ENCODE measurements at regions of chr10 and their contacts with region 1.

Region 1: GRCh38 chr10:132506711-132507408 is 30.7 kb upstream of the INPP5A start:
- DNase-seq: peak in 1 of 2 donors; percentile 77
- ATAC-seq: peak; percentile 28 to 79 (median 63)
- H3K4me3 ChIP-seq: no peak overlapping the region
- H3K27ac ChIP-seq: peak overlapping the region; percentile 23
- H3K4me1 ChIP-seq: peaks cover 18% of the 10 kb centered on the region
- H3K27me3 ChIP-seq: no peaks in the 10 kb centered on the region
- CTCF ChIP-seq: no peak

Region 2: DNA sequence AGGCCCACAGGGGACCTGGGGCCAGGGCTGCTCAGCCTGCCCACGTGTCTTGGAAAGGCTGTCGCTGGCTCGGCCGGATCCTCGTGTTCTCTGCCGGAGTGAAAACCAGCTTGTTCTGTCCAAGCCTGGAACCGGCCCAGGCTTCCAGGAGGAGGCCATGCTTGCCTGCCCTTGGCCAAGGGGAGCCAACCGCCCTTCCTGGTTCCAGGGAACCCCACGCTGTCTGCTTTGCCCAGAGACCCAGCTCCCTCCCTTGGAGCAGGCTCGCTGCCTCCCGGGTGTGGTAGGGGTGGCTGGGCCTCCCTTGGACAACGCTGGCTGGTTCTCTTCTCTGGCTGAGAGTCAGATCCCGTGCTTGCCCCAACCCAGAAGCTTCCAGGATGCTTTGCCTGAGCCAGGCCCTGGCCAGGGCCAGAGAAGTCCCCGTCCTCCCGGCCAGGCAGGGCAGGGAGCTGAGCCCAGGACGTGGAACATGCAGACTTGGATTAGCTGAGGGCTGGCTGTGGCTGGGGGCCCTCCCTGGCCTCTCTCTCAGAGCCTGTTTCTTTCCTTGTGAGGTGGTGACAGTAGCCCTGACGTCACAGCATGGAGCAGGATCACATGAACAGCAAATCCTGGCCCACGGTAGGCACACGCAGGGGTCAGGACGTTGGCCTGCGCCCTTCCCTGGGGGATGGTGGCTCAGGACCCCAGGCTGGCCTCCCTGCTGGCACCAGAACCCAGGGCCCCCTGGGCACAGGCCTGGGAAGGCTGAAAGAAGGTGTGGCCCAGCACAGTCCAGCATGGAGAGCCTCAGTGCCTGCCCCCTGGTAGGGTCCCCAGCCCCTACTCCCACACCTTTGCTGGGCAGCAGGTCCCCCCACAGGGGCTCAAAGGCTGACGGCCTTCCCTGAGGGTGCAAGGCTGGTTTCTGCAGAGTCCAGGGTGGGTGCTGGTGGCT is 42.3 kb before region 1 on chr10:
- intact Hi-C with region 1: loop called in 1 of 2 experiments (anchors 5 kb)
- DNase-seq: peak; percentile 90 to 96
- ATAC-seq: peak; percentile 75 to 89 (median 85)
- H3K4me3 ChIP-seq: peak overlapping the region; percentile 27
- H3K27ac ChIP-seq: peak overlapping the region; percentile 89
- H3K4me1 ChIP-seq: peaks cover 32% of the 10 kb centered on the region
- H3K27me3 ChIP-seq: no peaks in the 10 kb centered on the region
- CTCF ChIP-seq: no peak

Measured in psoas muscle (tissue), 8 donors.